ENCODE measurements at regions of chr17 and their contacts with region 1.

Region 1: GRCh38 chr17:36486204-36487194 is at the start of gene ZNHIT3:
- DNase-seq: peak; percentile 95
- H3K4me3 Mint-ChIP-seq: peak within 1 kb of the TSS; percentile 94
- H3K27ac Mint-ChIP-seq: peak within 1 kb of the TSS; percentile 98
- H3K4me1 Mint-ChIP-seq: peaks cover 57% of the 10 kb centered on the region
- H3K27me3 Mint-ChIP-seq: peaks cover 10% of the 10 kb centered on the region
- total RNA-seq, gene ZNHIT3: 35.2 to 36.0 TPM

Region 2: DNA sequence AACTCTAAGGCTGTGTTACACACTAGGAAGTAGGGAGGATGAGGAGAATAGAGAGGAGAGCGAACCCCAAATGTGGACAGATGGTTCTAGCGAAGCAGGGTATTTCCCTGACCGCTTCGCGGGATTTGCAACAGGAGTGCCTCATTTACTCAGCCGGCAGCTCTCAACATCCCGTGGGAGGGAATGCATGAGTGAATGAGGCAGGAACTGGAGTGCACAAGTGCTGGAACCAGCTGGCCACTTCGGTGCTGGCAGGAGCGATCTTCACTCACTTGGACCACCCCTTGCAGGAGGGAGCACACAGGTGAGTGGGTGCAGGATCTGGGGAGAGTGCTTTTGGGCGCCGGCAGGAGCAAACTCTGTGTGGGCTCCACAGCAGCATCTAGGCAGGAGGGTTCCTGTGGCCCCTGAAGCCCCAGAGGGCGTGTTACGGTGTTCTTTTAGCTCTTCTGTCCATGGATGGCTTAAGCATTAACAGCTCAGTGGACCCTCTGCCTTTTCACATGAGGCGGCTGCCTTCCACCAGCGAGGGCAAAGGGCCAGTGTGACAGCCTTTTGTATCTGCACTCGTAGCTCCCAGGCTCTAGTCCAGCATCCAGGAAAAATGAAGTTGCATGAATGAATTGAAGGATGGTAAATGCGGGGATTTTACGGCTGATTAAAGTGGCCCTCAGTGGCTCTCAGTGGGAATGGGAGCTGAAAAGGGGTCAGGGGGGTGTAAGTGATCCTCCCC is 17.4 kb before region 1 on chr17:
- CTCF ChIA-PET with region 1: interaction called, 10 read pairs
- POLR2A ChIA-PET with region 1: no interaction called
- DNase-seq: no peak
- H3K4me3 Mint-ChIP-seq: no peak overlapping the region
- H3K27ac Mint-ChIP-seq: no peak overlapping the region
- H3K4me1 Mint-ChIP-seq: no peaks in the 10 kb centered on the region
- H3K27me3 Mint-ChIP-seq: peaks cover 17% of the 10 kb centered on the region

Region 3: GRCh38 chr17:36506831-36507230 is 20.3 kb after region 1 on chr17:
- CTCF ChIA-PET with region 1: no interaction called
- POLR2A ChIA-PET with region 1: no interaction called
- DNase-seq: no peak
- H3K4me3 Mint-ChIP-seq: no peak overlapping the region
- H3K27ac Mint-ChIP-seq: no peak overlapping the region
- H3K4me1 Mint-ChIP-seq: no peaks in the 10 kb centered on the region
- H3K27me3 Mint-ChIP-seq: no peaks in the 10 kb centered on the region

Region 4: DNA sequence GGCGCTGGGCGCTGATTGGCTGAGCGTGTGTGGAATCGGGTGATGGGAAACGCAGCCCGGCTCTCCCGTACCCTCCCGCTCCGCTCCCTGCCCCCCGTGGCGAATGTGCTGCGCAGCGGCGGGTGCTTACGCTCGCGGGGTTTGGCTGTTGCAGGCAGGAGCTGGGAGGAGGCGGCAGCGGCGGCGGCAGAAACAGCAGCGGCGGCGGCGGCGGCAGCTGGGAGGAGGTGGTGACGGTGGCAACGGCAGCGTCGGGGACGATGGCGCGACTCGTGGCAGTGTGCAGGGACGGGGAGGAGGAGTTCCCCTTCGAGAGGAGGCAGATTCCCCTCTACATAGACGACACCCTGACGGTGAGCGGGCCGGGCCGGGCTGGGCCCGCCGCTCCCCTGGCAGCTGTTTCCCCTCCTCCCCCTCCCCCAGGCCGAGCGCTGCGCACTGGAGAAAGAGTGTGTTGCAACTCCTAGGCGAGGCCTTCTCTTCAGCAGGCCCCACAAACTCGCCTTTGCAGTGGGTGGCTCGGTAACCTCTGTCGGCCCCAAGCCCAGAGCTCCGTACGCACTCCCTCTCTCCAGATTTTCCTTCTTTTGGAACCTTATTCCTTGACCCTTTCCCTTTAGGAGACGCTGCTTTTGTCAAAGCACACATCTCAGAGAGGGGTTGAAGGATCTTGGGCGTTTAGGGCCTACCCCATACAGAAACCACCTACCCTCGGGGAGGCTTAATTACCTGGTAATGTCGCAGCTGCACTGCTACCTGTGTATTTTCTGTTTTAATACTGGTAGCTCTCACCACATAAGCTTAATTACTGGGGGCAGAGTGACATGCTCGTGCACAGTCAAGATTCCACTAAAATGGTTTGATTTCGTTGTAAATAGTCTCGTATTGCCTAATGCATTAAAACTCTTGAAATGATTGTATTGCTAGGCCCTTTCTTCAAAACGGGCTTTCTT is 59.2 kb after region 1 on chr17:
- CTCF ChIA-PET with region 1: no interaction called
- POLR2A ChIA-PET with region 1: no interaction called
- DNase-seq: peak; percentile 96
- H3K4me3 Mint-ChIP-seq: peak overlapping the region; percentile 88
- H3K27ac Mint-ChIP-seq: peak overlapping the region; percentile 95
- H3K4me1 Mint-ChIP-seq: peaks cover 43% of the 10 kb centered on the region
- H3K27me3 Mint-ChIP-seq: no peaks in the 10 kb centered on the region

Measured in activated CD4-positive, alpha-beta T cell treated with anti-CD3 and anti-CD28 coated beads, Interleukin-2, amount 10 ng/mL, durations not matched to agents 7 days and 5 days (primary cell).